Activated CD4-positive, alpha-beta T cell treated with anti-CD3 and anti-CD28 coated beads for 36 hours (primary cell): ENCODE measurements at regions of chr14 and their contacts with region 1.

Region 1: DNA sequence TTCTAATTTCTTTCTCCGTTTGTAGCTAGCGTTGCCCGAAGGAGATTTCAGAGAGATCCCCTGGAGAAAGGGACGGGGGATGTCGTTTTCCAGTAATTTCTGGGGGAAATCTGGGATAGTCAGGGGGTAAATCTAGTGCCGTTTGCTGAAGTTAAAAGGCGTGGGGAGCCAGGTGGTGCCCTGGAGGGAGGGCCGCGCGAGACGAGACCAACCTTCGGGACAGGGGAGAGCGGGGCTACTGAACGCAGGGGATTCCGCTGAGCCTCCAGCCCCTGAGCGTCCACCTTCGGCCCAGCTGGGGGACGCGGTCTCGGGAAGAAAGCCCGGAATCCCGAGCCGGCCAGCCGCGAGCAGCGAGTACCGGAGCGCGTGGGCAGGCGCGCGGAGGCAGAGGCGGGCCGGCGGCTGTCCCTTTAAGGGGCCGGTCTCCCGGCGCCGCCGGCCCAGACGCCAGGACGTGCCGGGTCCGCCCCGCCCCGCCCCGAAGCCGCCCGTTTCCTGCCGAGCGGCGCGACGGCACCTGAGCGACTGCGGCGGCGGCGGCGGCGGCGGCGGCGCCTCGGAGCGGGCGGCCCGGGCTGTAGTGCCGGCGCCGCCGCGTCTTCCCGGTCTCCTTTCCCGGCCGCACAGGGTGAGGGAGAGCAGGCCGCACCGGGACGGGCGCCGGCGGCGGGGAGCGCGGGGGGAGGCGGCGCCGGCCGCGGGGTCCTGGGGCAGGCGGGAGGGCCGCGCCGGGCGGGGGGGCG is at the start of gene KTN1:
- DNase-seq: peak; percentile 92
- ATAC-seq: peak; percentile 86
- H3K4me3 Mint-ChIP-seq: peak within 1 kb of the TSS; percentile 86
- H3K27ac Mint-ChIP-seq: peak within 1 kb of the TSS; percentile 91
- H3K4me1 Mint-ChIP-seq: peaks cover 44% of the 10 kb centered on the region
- H3K27me3 Mint-ChIP-seq: no peaks in the 10 kb centered on the region
- total RNA-seq, gene KTN1: 117 to 138 TPM

Region 2: GRCh38 chr14:55026793-55027561 is 552.9 kb before region 1 on chr14 and contains the starts of genes SOCS4 and WDHD1:
- CTCF ChIA-PET with region 1: no interaction called
- POLR2A ChIA-PET with region 1: no interaction called
- intact Hi-C with region 1: loop called in 1 of 2 experiments (anchors 2 kb)
- DNase-seq: peak; percentile 98
- ATAC-seq: peak; percentile 93
- H3K4me3 Mint-ChIP-seq: peak within 1 kb of the TSS; percentile 95
- H3K27ac Mint-ChIP-seq: peak within 1 kb of the TSS; percentile 97
- H3K4me1 Mint-ChIP-seq: peaks cover 47% of the 10 kb centered on the region
- H3K27me3 Mint-ChIP-seq: no peaks in the 10 kb centered on the region
- total RNA-seq, gene SOCS4: 18.4 to 21.3 TPM
- total RNA-seq, gene WDHD1: 64.4 to 71.1 TPM

Region 3: DNA sequence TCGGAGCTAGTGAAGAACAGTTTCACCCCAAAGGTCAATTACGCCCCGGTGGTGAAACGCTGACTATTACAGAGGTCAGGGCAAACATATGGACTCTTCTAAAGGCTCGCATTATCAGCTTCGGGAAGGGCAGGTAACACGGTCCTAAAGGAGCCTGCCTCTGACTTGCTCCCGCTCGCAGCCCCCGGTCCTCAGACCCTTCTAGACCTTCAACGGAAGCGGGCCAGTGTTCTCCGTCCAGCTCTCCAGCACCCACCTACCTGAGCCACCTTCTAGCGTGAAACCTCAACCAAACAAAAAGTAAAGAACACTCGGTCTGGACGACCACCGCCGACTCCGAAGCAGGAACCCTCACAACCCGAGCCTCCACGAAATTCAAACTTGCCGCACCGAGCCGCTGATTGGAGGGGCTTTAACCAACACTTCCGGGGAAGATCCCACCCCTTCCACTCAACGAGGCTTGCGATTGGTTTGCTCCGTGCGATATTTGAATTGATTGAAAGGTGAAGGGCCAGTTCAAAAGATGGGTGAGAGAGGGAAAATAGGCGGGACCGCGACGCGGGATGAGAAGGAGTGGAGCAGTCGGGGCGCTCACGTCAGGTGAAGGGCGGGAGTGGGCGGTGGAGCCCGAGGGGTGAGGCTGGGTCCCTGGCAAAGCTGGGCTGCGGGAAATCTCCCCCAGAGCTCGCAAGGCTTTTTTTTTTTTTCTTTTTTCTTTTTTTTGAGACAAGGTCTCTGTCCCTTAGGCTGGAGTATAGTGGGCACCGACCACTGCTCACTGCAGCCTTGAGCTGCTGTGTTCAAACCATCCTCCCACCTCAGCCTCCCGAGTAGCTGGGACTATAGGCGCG is 388.5 kb before region 1 on chr14 and contains the start of gene DLGAP5:
- CTCF ChIA-PET with region 1: interaction called, 3 read pairs
- POLR2A ChIA-PET with region 1: no interaction called
- intact Hi-C with region 1: loop called in 1 of 2 experiments (anchors 1 kb)
- DNase-seq: peak; percentile 95
- ATAC-seq: peak; percentile 99
- H3K4me3 Mint-ChIP-seq: peak within 1 kb of the TSS; percentile 91
- H3K27ac Mint-ChIP-seq: peak within 1 kb of the TSS; percentile 84
- H3K4me1 Mint-ChIP-seq: peaks cover 29% of the 10 kb centered on the region
- H3K27me3 Mint-ChIP-seq: no peaks in the 10 kb centered on the region
- total RNA-seq, gene DLGAP5: 97.4 to 100 TPM

Region 4: DNA sequence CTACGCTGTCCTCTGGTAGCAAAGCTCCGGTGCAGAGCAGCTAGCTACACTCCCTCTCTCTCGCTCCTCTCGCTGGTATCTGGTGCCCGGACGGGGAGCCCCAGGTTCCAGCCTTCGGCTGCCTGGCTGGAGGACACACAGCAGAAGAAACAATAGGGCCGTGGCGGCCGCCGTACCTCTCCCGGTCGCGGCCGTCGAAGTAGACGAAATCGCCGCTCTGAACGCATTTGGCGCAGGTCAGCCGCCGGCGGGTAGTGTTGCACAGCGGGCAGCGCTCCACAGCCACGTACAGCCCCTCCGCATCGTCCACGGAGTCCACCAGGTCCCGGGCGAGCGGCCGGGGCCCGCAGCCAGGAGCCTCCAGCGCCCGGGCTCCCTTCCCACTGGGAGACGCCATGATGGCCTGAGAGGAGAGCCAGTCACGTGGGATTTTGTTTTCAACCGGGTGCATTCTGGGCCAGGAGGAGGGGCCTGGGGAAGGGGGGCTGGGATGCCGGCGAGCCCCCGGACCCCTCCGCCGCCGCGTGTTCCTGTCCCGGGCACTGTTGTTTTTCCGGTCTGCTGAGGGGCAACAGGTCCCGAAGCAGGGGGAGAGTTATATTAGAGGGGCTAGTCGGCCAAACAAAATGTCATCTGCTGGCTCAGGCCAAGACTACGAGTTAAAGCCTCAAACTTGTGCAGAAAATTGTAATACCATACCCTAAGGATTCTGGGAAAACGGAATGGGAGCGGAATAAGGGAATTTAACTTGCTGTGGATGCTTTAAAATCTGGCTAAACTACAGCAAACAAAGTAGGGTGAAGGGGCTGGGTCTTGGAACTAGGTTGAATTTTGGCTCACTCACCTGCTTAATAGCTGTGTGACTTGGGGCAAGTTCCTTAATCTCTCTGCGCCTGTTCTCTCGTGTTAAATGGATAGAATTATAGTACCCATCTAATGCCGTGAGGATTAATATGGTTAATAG is 168.2 kb before region 1 on chr14 and contains the start of gene ATG14:
- CTCF ChIA-PET with region 1: no interaction called
- POLR2A ChIA-PET with region 1: no interaction called
- intact Hi-C with region 1: loop called in 1 of 2 experiments (anchors 1 kb)
- DNase-seq: peak; percentile 88
- ATAC-seq: peak; percentile 99
- H3K4me3 Mint-ChIP-seq: peak within 1 kb of the TSS; percentile 79
- H3K27ac Mint-ChIP-seq: peak within 1 kb of the TSS; percentile 82
- H3K4me1 Mint-ChIP-seq: peaks cover 27% of the 10 kb centered on the region
- H3K27me3 Mint-ChIP-seq: no peaks in the 10 kb centered on the region
- total RNA-seq, gene ATG14: 5.0 to 5.1 TPM

Region 5: GRCh38 chr14:55458800-55459515 is 120.9 kb before region 1 on chr14:
- CTCF ChIA-PET with region 1: no interaction called
- POLR2A ChIA-PET with region 1: no interaction called
- intact Hi-C with region 1: loop called in 1 of 2 experiments (anchors 1 kb)
- DNase-seq: no peak
- ATAC-seq: peak; percentile 84
- H3K4me3 Mint-ChIP-seq: no peak overlapping the region
- H3K27ac Mint-ChIP-seq: no peak overlapping the region
- H3K4me1 Mint-ChIP-seq: peaks cover 18% of the 10 kb centered on the region
- H3K27me3 Mint-ChIP-seq: peaks cover 8% of the 10 kb centered on the region

Region 6: DNA sequence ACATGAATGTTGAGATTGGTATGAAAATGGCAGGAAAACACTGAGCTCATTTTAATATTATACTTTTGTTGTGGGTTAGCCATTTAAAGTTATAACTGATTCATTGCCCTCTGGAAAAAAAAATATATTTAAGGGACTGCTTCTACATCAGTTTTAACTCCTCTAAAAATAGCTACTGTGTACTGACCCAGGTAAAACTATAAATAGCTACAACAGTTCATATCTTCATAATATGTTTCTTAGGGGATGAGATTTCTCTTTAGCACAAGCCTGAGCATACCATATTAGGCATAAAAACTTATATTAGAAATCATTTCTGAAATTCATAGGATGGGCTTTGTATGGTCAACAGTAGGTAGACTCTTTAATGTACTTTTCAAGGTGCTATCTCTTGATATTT is 81.1 kb after region 1 on chr14:
- CTCF ChIA-PET with region 1: no interaction called
- POLR2A ChIA-PET with region 1: no interaction called
- intact Hi-C with region 1: no loop called
- DNase-seq: no peak
- ATAC-seq: no peak
- H3K4me3 Mint-ChIP-seq: no peak overlapping the region
- H3K27ac Mint-ChIP-seq: no peak overlapping the region
- H3K4me1 Mint-ChIP-seq: peaks cover 17% of the 10 kb centered on the region
- H3K27me3 Mint-ChIP-seq: no peaks in the 10 kb centered on the region

Region 7: GRCh38 chr14:56579345-56580220 is 999.7 kb after region 1 on chr14 and contains the start of gene TMEM260:
- CTCF ChIA-PET with region 1: interaction called, 3 read pairs
- POLR2A ChIA-PET with region 1: no interaction called
- intact Hi-C with region 1: loop called (anchors 5 kb)
- DNase-seq: peak; percentile 93
- ATAC-seq: peak; percentile 89
- H3K4me3 Mint-ChIP-seq: peak within 1 kb of the TSS; percentile 82
- H3K27ac Mint-ChIP-seq: peak within 1 kb of the TSS; percentile 95
- H3K4me1 Mint-ChIP-seq: peaks cover 33% of the 10 kb centered on the region
- H3K27me3 Mint-ChIP-seq: no peaks in the 10 kb centered on the region
- total RNA-seq, gene TMEM260: 15.2 to 17.9 TPM

Region 8: GRCh38 chr14:57390028-57390805 is 1810.3 kb after region 1 on chr14 and contains the start of gene NAA30:
- CTCF ChIA-PET with region 1: no interaction called
- POLR2A ChIA-PET with region 1: no interaction called
- intact Hi-C with region 1: loop called in 1 of 2 experiments (anchors 2 kb)
- DNase-seq: peak; percentile 96
- ATAC-seq: peak; percentile 91
- H3K4me3 Mint-ChIP-seq: peak within 1 kb of the TSS; percentile 81
- H3K27ac Mint-ChIP-seq: peak within 1 kb of the TSS; percentile 93
- H3K4me1 Mint-ChIP-seq: peaks cover 37% of the 10 kb centered on the region
- H3K27me3 Mint-ChIP-seq: no peaks in the 10 kb centered on the region
- total RNA-seq, gene NAA30: 14.2 to 17.6 TPM